ENCODE measurements at regions of chr5 and their contacts with region 1.

Region 1: GRCh38 chr5:106121972-106122605 is 1548.6 kb downstream of the EFNA5 start:
- DNase-seq: no peak
- ATAC-seq: peak; percentile 95
- H3K4me3 ChIP-seq: no peak overlapping the region
- H3K27ac ChIP-seq: no peak overlapping the region
- H3K4me1 ChIP-seq: no peaks in the 10 kb centered on the region
- H3K27me3 ChIP-seq: no peaks in the 10 kb centered on the region
- CTCF ChIP-seq: peak; percentile 80
- EP300 ChIP-seq: no peak
- POLR2A ChIP-seq: no peak
- RAD21 ChIP-seq: no peak

Region 2: GRCh38 chr5:104347119-104347708 is 1774.9 kb before region 1 on chr5:
- CTCF ChIA-PET with region 1: no interaction called
- POLR2A ChIA-PET with region 1: no interaction called
- in situ Hi-C with region 1: no loop called
- intact Hi-C with region 1: loop called (anchors 5 kb)
- DNase-seq: no peak
- ATAC-seq: no peak
- H3K4me3 ChIP-seq: no peak overlapping the region
- H3K27ac ChIP-seq: no peak overlapping the region
- H3K4me1 ChIP-seq: no peaks in the 10 kb centered on the region
- H3K27me3 ChIP-seq: no peaks in the 10 kb centered on the region
- CTCF ChIP-seq: peak; percentile 22
- EP300 ChIP-seq: no peak
- POLR2A ChIP-seq: no peak
- RAD21 ChIP-seq: no peak

Region 3: DNA sequence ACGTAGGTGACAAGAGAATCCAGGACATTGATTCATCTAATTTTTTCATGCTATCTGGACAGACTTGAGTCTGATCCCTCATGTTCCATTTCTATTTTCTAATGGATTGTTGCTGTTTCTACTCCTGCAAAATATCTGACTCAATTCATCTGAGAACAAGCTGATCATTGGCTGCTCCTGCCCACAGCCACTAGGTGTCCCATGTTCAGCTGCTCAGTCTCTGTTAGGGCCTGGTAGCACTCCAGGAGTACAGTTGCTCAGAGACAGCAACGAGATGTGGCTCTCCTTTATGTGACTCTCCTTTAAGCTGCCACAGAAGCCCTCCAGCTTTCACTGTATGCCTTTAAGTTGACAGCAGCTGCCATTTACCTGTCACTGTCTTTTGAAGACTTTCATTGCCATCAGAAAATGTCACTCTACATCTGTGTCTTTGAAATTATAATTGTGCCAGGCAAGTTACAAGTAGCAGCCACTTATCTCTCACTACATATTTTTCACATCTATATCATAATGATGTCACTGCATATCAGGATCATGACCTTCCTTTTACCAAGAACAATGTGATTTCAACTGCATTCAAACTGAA is 615.3 kb before region 1 on chr5:
- CTCF ChIA-PET with region 1: no interaction called
- POLR2A ChIA-PET with region 1: no interaction called
- in situ Hi-C with region 1: no loop called
- intact Hi-C with region 1: loop called (anchors 2 kb)
- DNase-seq: peak; percentile 12
- ATAC-seq: peak; percentile 89
- H3K4me3 ChIP-seq: no peak overlapping the region
- H3K27ac ChIP-seq: no peak overlapping the region
- H3K4me1 ChIP-seq: no peaks in the 10 kb centered on the region
- H3K27me3 ChIP-seq: no peaks in the 10 kb centered on the region
- CTCF ChIP-seq: peak; percentile 43
- EP300 ChIP-seq: no peak
- POLR2A ChIP-seq: no peak
- RAD21 ChIP-seq: no peak

Region 4: DNA sequence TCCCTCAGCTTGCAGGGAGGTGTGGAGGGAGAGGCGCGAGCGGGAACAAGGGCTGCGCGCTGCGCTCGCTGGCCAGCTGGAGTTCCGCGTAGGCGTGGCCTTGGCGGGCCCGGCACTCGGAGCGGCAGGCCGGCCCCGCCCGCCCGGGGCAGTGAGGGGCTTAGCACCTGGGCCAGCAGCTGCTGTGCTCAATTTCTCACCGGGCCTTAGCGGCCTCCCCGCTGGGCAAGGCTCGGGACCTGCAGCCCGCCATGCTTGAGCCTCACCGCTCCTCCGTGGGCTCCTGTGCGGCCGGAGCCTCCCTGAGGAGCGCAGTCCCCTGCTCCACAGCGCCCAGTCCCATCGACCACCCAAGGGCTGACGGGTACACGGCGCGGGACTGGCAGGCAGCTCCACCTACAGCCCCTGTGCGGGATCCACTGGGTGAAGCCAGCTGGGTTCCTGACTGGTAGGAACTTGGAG is 32.2 kb after region 1 on chr5:
- CTCF ChIA-PET with region 1: no interaction called
- POLR2A ChIA-PET with region 1: no interaction called
- in situ Hi-C with region 1: no loop called
- intact Hi-C with region 1: no loop called
- DNase-seq: no peak
- ATAC-seq: no peak
- H3K4me3 ChIP-seq: no peak overlapping the region
- H3K27ac ChIP-seq: no peak overlapping the region
- H3K4me1 ChIP-seq: no peaks in the 10 kb centered on the region
- H3K27me3 ChIP-seq: no peaks in the 10 kb centered on the region
- CTCF ChIP-seq: no peak
- EP300 ChIP-seq: no peak
- POLR2A ChIP-seq: no peak
- RAD21 ChIP-seq: no peak

Region 5: DNA sequence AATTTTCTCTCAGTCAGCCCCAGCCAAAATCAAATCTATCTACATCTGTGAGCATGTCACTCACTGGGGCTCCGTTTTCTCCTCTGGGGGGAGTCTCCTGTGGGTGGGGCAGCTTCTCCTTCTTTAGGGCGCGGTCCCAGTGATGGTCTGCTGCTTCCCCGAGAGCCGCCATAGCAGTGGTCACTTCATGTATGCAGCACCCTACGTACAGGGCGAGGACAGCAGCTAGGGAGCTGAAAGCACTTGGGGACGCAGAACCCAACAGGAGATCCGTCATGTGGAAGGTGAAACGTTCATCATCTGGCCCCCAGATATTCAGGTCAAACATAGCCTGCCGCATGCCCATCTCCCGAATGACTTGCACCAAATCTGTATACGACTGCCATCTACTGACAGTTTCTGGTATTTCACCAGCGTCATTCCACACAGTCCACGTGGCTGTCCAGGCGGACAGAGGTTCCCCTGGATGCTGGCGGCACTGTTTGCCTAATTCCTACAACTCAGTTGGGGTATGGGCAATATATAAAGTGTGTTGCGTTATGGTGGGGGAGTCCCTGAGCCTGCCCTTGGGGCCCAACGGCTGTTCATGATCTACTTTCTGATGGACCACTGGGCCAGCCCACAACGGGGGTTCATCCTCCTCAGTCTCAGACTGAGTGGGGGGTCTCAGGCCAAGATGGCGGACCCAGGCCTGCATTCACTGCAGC is 753.7 kb after region 1 on chr5:
- CTCF ChIA-PET with region 1: no interaction called
- POLR2A ChIA-PET with region 1: no interaction called
- in situ Hi-C with region 1: no loop called
- intact Hi-C with region 1: loop called (anchors 10 kb)
- DNase-seq: peak; percentile 62
- ATAC-seq: peak; percentile 97
- H3K4me3 ChIP-seq: no peak overlapping the region
- H3K27ac ChIP-seq: no peak overlapping the region
- H3K4me1 ChIP-seq: no peaks in the 10 kb centered on the region
- H3K27me3 ChIP-seq: no peaks in the 10 kb centered on the region; a peak in 1 of 5 replicates
- CTCF ChIP-seq: peak; percentile 87
- EP300 ChIP-seq: no peak
- POLR2A ChIP-seq: no peak
- RAD21 ChIP-seq: 0 out of 2 replicates have a peak, but pooled peaks have one; percentile 12